ENCODE measurements at regions of chr17 and their contacts with region 1.

Region 1: GRCh38 chr17:43760254-43760852 is 1.8 kb upstream of the SOST start:
- DNase-seq: peak; percentile 91 to 97 (median 96)
- ATAC-seq: peak; percentile 82 to 85
- H3K4me3 ChIP-seq: no peak overlapping the region
- H3K27ac ChIP-seq: no peak overlapping the region
- H3K4me1 ChIP-seq: peaks cover 2% of the 10 kb centered on the region
- H3K27me3 ChIP-seq: no peaks in the 10 kb centered on the region

Region 2: GRCh38 chr17:43556292-43556691 is 204.1 kb before region 1 on chr17:
- intact Hi-C with region 1: loop called in 1 of 4 experiments (anchors 10 kb)
- DNase-seq: no peak
- ATAC-seq: peak; percentile 34 to 36
- H3K4me3 ChIP-seq: no peak overlapping the region
- H3K27ac ChIP-seq: no peak overlapping the region
- H3K4me1 ChIP-seq: peaks cover 3% of the 10 kb centered on the region
- H3K27me3 ChIP-seq: no peaks in the 10 kb centered on the region

Region 3: DNA sequence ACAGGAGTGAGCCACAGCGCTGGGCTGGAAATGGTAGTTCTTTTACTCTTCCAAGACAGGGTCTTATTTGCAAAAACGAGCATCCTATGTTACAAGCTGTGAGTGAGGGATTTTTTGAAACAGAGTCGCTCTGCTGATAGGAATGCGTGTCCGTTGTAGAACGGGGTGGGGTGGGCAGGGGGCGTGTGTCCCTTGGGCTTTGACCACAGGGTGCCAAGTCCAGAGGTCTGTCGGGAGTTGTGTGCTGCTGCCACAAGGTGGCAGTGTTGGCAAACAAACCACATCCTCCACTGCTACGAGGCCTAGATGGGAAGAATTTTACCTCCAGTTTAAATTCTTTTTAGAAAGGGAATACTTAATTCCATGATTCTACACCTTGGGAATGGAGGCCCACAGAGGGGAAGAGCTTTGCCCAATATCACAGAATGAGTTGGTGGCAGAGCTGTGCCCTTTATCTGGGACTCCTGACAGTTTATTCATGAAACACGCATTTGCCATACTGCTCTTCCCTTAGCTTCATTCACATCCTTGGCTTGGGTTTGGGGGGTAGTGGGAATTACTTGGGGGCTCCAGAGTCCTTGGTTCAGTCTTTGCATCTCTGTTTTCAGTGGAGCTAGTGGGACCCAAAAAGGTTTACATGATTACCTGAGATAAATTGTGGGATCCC is 183.7 kb before region 1 on chr17:
- intact Hi-C with region 1: loop called in 3 of 4 experiments (anchors 5 to 10 kb)
- DNase-seq: peak; percentile 66 to 85 (median 84)
- ATAC-seq: peak; percentile 76 to 83
- H3K4me3 ChIP-seq: no peak overlapping the region
- H3K27ac ChIP-seq: no peak overlapping the region
- H3K4me1 ChIP-seq: peaks cover 7% of the 10 kb centered on the region
- H3K27me3 ChIP-seq: no peaks in the 10 kb centered on the region

Region 4: GRCh38 chr17:43694077-43694870 is 66.1 kb before region 1 on chr17:
- intact Hi-C with region 1: loop called (anchors 2 kb)
- DNase-seq: peak; percentile 70 to 87 (median 81)
- ATAC-seq: peak; percentile 79 to 82
- H3K4me3 ChIP-seq: no peak overlapping the region
- H3K27ac ChIP-seq: no peak overlapping the region
- H3K4me1 ChIP-seq: peaks cover 5% of the 10 kb centered on the region
- H3K27me3 ChIP-seq: no peaks in the 10 kb centered on the region

Region 5: DNA sequence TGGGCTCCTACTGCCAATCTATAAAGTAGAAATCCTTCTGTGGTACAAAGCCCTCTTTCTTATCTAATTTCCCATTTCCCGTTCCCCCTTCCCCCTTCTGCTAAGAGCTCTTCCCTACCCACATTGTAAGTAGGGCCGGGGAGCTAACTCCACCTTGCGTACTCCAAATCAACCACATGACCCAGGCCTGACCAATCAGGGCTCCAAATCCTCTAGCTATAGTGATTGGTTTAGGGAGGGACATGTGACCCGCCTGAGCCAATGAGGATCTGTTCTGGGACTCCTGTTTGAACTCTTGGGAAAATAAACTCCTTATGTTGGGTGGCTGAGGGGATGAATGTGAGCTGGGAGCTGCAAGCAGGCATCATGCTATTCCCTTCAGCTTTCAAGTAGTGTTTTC is 57.7 kb before region 1 on chr17:
- intact Hi-C with region 1: loop called in 2 of 4 experiments (anchors 2 kb)
- DNase-seq: no peak
- ATAC-seq: no peak
- H3K4me3 ChIP-seq: no peak overlapping the region
- H3K27ac ChIP-seq: no peak overlapping the region
- H3K4me1 ChIP-seq: no peaks in the 10 kb centered on the region
- H3K27me3 ChIP-seq: no peaks in the 10 kb centered on the region

Region 6: GRCh38 chr17:43861024-43861621 is 100.8 kb after region 1 on chr17:
- intact Hi-C with region 1: no loop called
- DNase-seq: peak in 2 of 3 donors; percentile 59 to 87
- ATAC-seq: peak; percentile 75 to 80
- H3K4me3 ChIP-seq: no peak overlapping the region
- H3K27ac ChIP-seq: peak overlapping the region; percentile 90
- H3K4me1 ChIP-seq: peaks cover 24% of the 10 kb centered on the region
- H3K27me3 ChIP-seq: no peaks in the 10 kb centered on the region

Region 7: GRCh38 chr17:44451832-44452231 is 691.5 kb after region 1 on chr17:
- intact Hi-C with region 1: no loop called
- DNase-seq: no peak
- ATAC-seq: no peak
- H3K4me3 ChIP-seq: no peak overlapping the region
- H3K27ac ChIP-seq: no peak overlapping the region
- H3K4me1 ChIP-seq: no peaks in the 10 kb centered on the region
- H3K27me3 ChIP-seq: no peaks in the 10 kb centered on the region

Measured in right cardiac atrium (tissue), 5 donors.